Activated CD4-positive, alpha-beta T cell treated with anti-CD3 and anti-CD28 coated beads, Interleukin-2, amount 10 ng/mL, durations not matched to agents 7 days and 5 days (primary cell): ENCODE measurements at regions of chr2 and their contacts with region 1.

Region 1: GRCh38 chr2:25328152-25329085 is 13.3 kb downstream of the DNMT3A start:
- DNase-seq: no peak
- H3K4me3 Mint-ChIP-seq: no peak overlapping the region
- H3K27ac Mint-ChIP-seq: no peak overlapping the region
- H3K4me1 Mint-ChIP-seq: peaks cover 28% of the 10 kb centered on the region
- H3K27me3 Mint-ChIP-seq: no peaks in the 10 kb centered on the region

Region 2: GRCh38 chr2:25201265-25201664 is 127.2 kb before region 1 on chr2:
- CTCF ChIA-PET with region 1: no interaction called
- POLR2A ChIA-PET with region 1: no interaction called
- DNase-seq: no peak
- H3K4me3 Mint-ChIP-seq: no peak overlapping the region
- H3K27ac Mint-ChIP-seq: no peak overlapping the region
- H3K4me1 Mint-ChIP-seq: peaks cover 13% of the 10 kb centered on the region
- H3K27me3 Mint-ChIP-seq: peaks cover 4% of the 10 kb centered on the region

Region 3: GRCh38 chr2:25309402-25309801 is 19.0 kb before region 1 on chr2:
- CTCF ChIA-PET with region 1: interaction called, 11 read pairs
- POLR2A ChIA-PET with region 1: no interaction called
- DNase-seq: peak; percentile 74
- H3K4me3 Mint-ChIP-seq: no peak overlapping the region
- H3K27ac Mint-ChIP-seq: no peak overlapping the region
- H3K4me1 Mint-ChIP-seq: peaks cover 74% of the 10 kb centered on the region
- H3K27me3 Mint-ChIP-seq: no peaks in the 10 kb centered on the region